ENCODE measurements at regions of chr9 and their contacts with region 1.

Region 1: GRCh38 chr9:28073270-28073669 is 500.0 kb upstream of the C9orf72 start:
- DNase-seq: peak; percentile 17
- H3K4me3 ChIP-seq: no peak overlapping the region
- H3K27me3 ChIP-seq: no peaks in the 10 kb centered on the region
- CTCF ChIP-seq: peak; percentile 61

Region 2: DNA sequence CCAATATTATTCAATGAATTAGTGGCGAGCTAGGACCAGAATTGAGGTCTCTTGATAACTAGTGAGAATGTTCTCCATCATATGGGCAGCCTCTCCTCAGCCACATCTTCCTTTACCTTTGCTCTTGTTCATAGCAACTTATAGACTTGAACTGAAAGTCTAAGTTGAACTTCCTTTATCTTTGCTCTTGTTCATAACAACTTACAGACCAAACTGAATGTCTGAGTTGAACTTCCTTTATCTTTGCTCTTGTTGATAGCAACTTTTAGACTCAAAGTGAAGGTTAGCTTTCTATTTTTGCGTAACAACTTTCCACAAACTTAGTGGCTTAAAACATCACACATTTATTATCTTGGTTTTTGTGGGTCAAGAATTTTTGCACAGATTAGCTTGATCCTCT is 353.6 kb before region 1 on chr9:
- CTCF ChIA-PET with region 1: interaction called, 16 read pairs
- POLR2A ChIA-PET with region 1: no interaction called
- DNase-seq: no peak
- H3K4me3 ChIP-seq: no peak overlapping the region
- H3K27me3 ChIP-seq: no peaks in the 10 kb centered on the region
- CTCF ChIP-seq: no peak

Region 3: DNA sequence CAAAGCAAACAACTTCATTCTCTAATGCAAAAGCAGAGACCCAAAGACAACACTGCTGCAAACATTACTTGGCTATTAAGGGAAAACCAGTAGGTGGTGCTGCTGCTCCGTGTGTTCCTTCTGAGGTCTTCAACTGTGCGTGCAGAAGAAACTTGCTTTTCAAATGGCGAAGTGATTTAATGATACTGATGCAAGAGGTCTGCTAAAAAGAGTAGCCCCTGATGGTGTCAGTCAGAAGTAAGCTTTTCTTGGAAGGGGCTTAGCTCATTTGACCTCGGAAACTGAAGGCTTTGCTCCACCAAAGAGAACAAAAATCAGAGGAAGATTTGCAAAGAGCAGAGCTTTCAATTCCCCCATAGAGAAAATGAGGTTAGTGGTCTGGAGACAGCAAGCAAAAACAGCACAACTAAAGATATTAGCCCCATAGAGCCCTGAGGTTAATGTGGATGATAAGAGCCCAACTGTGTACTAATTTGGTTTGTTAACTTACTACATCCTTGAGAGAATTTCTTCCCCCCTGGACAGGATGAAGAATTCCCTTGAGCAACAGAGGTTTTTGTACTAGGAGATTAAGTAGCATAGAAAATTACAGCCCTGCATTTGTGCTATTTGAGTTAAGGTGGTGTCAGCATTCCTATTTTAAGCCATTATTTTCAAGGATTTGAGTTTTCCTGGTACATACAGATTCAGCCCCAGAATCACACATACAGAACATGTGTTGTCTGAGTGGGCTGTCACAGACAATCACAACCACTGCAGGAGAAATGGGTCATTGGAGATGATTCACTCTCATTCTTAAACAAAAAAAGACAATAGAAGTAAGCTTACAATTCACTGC is 346.8 kb before region 1 on chr9:
- CTCF ChIA-PET with region 1: interaction called, 68 read pairs
- POLR2A ChIA-PET with region 1: no interaction called
- DNase-seq: no peak
- H3K4me3 ChIP-seq: no peak overlapping the region
- H3K27me3 ChIP-seq: no peaks in the 10 kb centered on the region
- CTCF ChIP-seq: peak; percentile 76

Region 4: GRCh38 chr9:27732494-27732893 is 340.8 kb before region 1 on chr9:
- CTCF ChIA-PET with region 1: interaction called, 68 read pairs
- POLR2A ChIA-PET with region 1: no interaction called
- DNase-seq: no peak
- H3K4me3 ChIP-seq: no peak overlapping the region
- H3K27me3 ChIP-seq: no peaks in the 10 kb centered on the region
- CTCF ChIP-seq: no peak

Region 5: DNA sequence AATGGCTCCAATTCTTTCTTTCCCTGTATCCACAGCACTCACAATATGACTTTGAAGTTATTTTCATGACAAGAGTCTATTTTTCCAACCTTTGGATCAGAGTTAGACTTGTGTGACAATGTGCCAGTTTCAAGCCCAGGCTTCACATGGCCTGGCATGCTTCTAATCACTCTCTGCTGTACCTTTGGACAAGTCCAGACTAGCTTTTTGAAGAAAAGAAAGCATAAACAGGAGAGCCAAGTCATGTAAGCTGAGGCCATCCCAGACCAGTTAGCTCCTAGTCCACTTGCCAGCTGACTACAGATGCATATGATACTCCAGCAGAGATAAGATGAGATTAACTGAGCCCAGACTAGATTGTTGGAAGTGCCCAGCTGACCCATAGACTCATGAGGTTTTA is 13.6 kb after region 1 on chr9:
- CTCF ChIA-PET with region 1: interaction called, 16 read pairs
- POLR2A ChIA-PET with region 1: no interaction called
- DNase-seq: no peak
- H3K4me3 ChIP-seq: no peak overlapping the region
- H3K27me3 ChIP-seq: no peaks in the 10 kb centered on the region
- CTCF ChIP-seq: no peak

Region 6: GRCh38 chr9:28120184-28120583 is 46.9 kb after region 1 on chr9:
- CTCF ChIA-PET with region 1: no interaction called
- POLR2A ChIA-PET with region 1: no interaction called
- DNase-seq: no peak
- H3K4me3 ChIP-seq: no peak overlapping the region
- H3K27me3 ChIP-seq: no peaks in the 10 kb centered on the region
- CTCF ChIP-seq: no peak